Aorta (tissue), 5 donors: ENCODE measurements at regions of chr12 and their contacts with region 1.

Region 1: DNA sequence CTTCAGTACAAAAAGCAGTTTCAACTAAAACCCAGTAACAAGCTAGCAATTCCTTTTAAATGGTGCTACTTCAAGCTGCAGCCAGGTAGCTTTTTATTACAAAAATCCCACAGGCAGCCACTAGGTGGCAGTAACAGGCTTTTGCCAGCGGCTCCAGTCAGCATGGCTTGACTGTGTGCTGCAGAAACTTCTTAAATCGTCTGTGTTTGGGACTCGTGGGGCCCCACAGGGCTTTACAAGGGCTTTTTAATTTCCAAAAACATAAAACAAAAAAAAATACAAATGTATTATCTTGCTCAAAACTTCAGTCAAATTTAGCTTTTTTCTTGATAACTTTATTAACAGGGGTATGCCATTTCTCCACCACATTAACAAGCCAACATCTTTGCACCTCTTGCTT is 3.6 kb upstream of the CLEC4E start:
- DNase-seq: peak; percentile 71 to 79
- ATAC-seq: peak; percentile 81
- H3K4me3 ChIP-seq: no peak overlapping the region
- H3K27ac ChIP-seq: no peak overlapping the region
- H3K4me1 ChIP-seq: no peaks in the 10 kb centered on the region
- H3K27me3 ChIP-seq: no peaks in the 10 kb centered on the region

Region 2: GRCh38 chr12:8145754-8146441 is 398.4 kb before region 1 on chr12:
- intact Hi-C with region 1: no loop called
- DNase-seq: peak; percentile 87 to 89
- ATAC-seq: peak; percentile 94
- H3K4me3 ChIP-seq: no peak overlapping the region
- H3K27ac ChIP-seq: peak overlapping the region in 1 of 2 donors; percentile 19
- H3K4me1 ChIP-seq: no peaks in the 10 kb centered on the region
- H3K27me3 ChIP-seq: no peaks in the 10 kb centered on the region

Region 3: GRCh38 chr12:8609061-8609570 is 64.8 kb after region 1 on chr12:
- intact Hi-C with region 1: loop called (anchors 1 to 5 kb)
- DNase-seq: no peak
- ATAC-seq: no peak
- H3K4me3 ChIP-seq: no peak overlapping the region
- H3K27ac ChIP-seq: no peak overlapping the region
- H3K4me1 ChIP-seq: no peaks in the 10 kb centered on the region
- H3K27me3 ChIP-seq: no peaks in the 10 kb centered on the region

Region 4: DNA sequence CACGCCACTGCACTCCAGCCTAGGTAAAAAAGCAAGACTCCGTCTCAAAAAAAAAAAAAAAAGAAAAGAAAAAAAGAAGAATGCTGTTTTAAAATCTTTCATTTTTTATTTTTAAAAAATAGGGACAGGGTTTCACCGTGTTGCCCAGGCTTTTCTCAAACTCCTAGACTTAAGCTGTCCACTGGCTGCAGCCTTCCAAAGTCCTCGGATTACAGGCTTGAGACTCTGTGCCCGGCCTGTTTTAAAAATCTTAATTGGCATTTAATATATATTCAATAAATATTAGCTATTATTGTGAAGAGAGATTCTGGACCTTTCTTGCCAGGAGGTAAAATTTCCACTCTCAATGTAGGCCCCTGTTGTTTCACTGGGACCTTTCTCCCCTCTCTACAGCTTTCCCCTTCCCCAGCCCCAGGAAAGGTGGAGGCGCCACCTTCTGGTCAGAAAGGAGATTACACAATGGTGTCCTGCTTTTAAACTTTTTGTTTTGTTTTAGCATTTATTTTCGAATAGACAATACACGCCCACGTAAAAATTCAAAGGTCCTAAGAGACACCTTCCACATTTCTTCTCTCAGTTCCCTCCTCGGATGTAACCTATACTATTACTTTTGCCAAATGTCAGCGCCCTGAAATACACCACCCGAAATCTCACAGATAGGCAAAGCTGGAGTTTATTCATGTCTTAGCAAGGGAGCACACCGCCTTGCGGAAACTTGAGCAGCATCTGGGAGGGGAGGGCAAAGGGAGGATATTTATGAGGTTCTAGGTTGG is 346.2 kb after region 1 on chr12:
- intact Hi-C with region 1: loop called in 1 of 2 experiments (anchors 10 kb)
- DNase-seq: no peak
- ATAC-seq: peak; percentile 86
- H3K4me3 ChIP-seq: peak overlapping the region; percentile 37 to 55
- H3K27ac ChIP-seq: no peak overlapping the region
- H3K4me1 ChIP-seq: no peaks in the 10 kb centered on the region
- H3K27me3 ChIP-seq: no peaks in the 10 kb centered on the region

Region 5: GRCh38 chr12:9039397-9039977 is 495.2 kb after region 1 on chr12:
- intact Hi-C with region 1: loop called (anchors 10 kb)
- DNase-seq: no peak
- ATAC-seq: peak; percentile 79
- H3K4me3 ChIP-seq: no peak overlapping the region
- H3K27ac ChIP-seq: no peak overlapping the region
- H3K4me1 ChIP-seq: no peaks in the 10 kb centered on the region
- H3K27me3 ChIP-seq: no peaks in the 10 kb centered on the region

Region 6: GRCh38 chr12:9049520-9050133 is 505.3 kb after region 1 on chr12:
- intact Hi-C with region 1: loop called in 1 of 2 experiments (anchors 10 kb)
- DNase-seq: no peak
- ATAC-seq: peak; percentile 57
- H3K4me3 ChIP-seq: no peak overlapping the region
- H3K27ac ChIP-seq: no peak overlapping the region
- H3K4me1 ChIP-seq: no peaks in the 10 kb centered on the region
- H3K27me3 ChIP-seq: no peaks in the 10 kb centered on the region